ENCODE measurements at regions of chr6 and their contacts with region 1.

Region 1: GRCh38 chr6:166956444-166957086 is at the start of gene RNASET2:
- DNase-seq: peak; percentile 95 to 100 (median 99)
- ATAC-seq: peak; percentile 93
- H3K4me3 ChIP-seq: peak within 1 kb of the TSS; percentile 86
- H3K4me3 Mint-ChIP-seq: peak within 1 kb of the TSS; percentile 87 to 99 (median 96)
- H3K27ac ChIP-seq: peak within 1 kb of the TSS; percentile 92
- H3K27ac Mint-ChIP-seq: peak within 1 kb of the TSS; percentile 95 to 99 (median 99)
- H3K4me1 ChIP-seq: peaks cover 41 to 66% of the 10 kb centered on the region in 2 donors
- H3K4me1 Mint-ChIP-seq: peaks cover 56 to 79% (median 73%) of the 10 kb centered on the region in 7 donors
- H3K27me3 ChIP-seq: no peaks in the 10 kb centered on the region
- H3K27me3 Mint-ChIP-seq: no peaks in the 10 kb centered on the region
- total RNA-seq, gene RNASET2: 147 to 332 (median 264) TPM

Region 2: DNA sequence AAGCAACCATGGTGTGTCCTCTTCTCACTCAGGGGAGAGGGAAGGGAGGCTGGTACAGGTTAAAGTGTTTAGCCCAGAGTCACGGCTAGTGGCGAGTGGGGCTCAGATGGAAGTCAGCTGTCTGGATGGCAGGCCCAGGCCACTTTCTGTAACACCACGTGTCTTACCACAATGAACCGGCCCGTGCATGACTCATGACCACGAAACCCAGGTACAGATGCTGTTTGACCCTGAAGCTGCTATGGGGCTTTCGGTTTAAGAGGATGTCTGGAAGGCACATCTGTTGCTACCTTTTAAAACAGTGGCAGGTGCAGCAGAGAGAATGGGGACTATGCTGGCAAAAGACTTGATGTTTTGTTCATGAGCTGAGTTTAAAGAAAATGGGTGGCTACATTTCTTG is 537.3 kb before region 1 on chr6:
- CTCF ChIA-PET with region 1: no interaction called
- POLR2A ChIA-PET with region 1: no interaction called
- intact Hi-C with region 1: loop called in 1 of 2 experiments (anchors 5 kb)
- DNase-seq: peak in 2 of 9 donors; percentile 34 to 52
- ATAC-seq: peak; percentile 42
- H3K4me3 ChIP-seq: no peak overlapping the region
- H3K4me3 Mint-ChIP-seq: peak overlapping the region; percentile 4 to 79 (median 57)
- H3K27ac ChIP-seq: peak overlapping the region; percentile 50
- H3K27ac Mint-ChIP-seq: peak overlapping the region; percentile 83 to 99 (median 97)
- H3K4me1 ChIP-seq: peaks cover 63 to 66% of the 10 kb centered on the region in 2 donors
- H3K4me1 Mint-ChIP-seq: peaks cover 52 to 73% (median 64%) of the 10 kb centered on the region in 7 donors
- H3K27me3 ChIP-seq: no peaks in the 10 kb centered on the region
- H3K27me3 Mint-ChIP-seq: peaks cover 0 to 1% (median 0%) of the 10 kb centered on the region in 5 donors

Region 3: DNA sequence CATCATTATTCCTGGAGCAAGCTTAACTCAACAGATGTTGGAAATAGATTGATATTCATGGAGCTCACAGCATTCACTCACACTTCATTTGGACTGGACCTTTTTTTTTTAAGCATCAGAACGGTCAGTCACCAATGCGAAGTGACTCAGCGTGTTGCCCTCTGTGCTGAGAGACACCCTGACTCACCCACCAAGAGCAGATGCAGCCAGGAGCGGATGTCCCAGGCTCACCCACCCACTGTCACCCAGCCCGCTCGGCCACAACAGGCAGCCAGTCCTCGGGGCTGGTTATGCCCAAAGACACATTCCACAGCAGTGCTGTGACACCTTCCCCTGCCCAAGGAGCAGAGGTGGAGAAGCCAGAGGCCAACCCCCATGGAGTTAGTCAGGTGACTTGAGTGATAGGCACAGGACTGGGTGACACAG is 15.9 kb before region 1 on chr6:
- CTCF ChIA-PET with region 1: interaction called, 3 read pairs
- POLR2A ChIA-PET with region 1: interaction called, 213 read pairs
- intact Hi-C with region 1: loop called (anchors 1 kb)
- DNase-seq: no peak
- ATAC-seq: no peak
- H3K4me3 ChIP-seq: no peak overlapping the region
- H3K4me3 Mint-ChIP-seq: no peak overlapping the region
- H3K27ac ChIP-seq: no peak overlapping the region
- H3K27ac Mint-ChIP-seq: peak overlapping the region in 7 of 9 donors; percentile 21 to 96 (median 65)
- H3K4me1 ChIP-seq: peaks cover 0 to 21% of the 10 kb centered on the region in 2 donors
- H3K4me1 Mint-ChIP-seq: peaks cover 16 to 60% (median 32%) of the 10 kb centered on the region in 7 donors
- H3K27me3 ChIP-seq: no peaks in the 10 kb centered on the region
- H3K27me3 Mint-ChIP-seq: no peaks in the 10 kb centered on the region

Region 4: GRCh38 chr6:166999145-166999883 is 42.7 kb after region 1 on chr6 and contains the start of gene CEP43:
- CTCF ChIA-PET with region 1: interaction called, 3 read pairs
- POLR2A ChIA-PET with region 1: interaction called, 24 read pairs
- intact Hi-C with region 1: loop called (anchors 1 kb)
- DNase-seq: peak; percentile 64 to 93 (median 81)
- ATAC-seq: peak; percentile 94
- H3K4me3 ChIP-seq: peak within 1 kb of the TSS; percentile 83
- H3K4me3 Mint-ChIP-seq: peak within 1 kb of the TSS; percentile 85 to 95 (median 88)
- H3K27ac ChIP-seq: peak within 1 kb of the TSS; percentile 78
- H3K27ac Mint-ChIP-seq: peak within 1 kb of the TSS; percentile 61 to 95 (median 81)
- H3K4me1 ChIP-seq: peaks cover 16% of the 10 kb centered on the region in 2 donors
- H3K4me1 Mint-ChIP-seq: peaks cover 28 to 38% (median 30%) of the 10 kb centered on the region in 7 donors
- H3K27me3 ChIP-seq: no peaks in the 10 kb centered on the region
- H3K27me3 Mint-ChIP-seq: no peaks in the 10 kb centered on the region
- total RNA-seq, gene CEP43: 11.5 to 17.6 (median 15.5) TPM

Measured in naive thymus-derived CD4-positive, alpha-beta T cell (primary cell).